Gastrocnemius medialis (tissue), 4 donors: ENCODE measurements at regions of chr10 and their contacts with region 1.

Region 1: DNA sequence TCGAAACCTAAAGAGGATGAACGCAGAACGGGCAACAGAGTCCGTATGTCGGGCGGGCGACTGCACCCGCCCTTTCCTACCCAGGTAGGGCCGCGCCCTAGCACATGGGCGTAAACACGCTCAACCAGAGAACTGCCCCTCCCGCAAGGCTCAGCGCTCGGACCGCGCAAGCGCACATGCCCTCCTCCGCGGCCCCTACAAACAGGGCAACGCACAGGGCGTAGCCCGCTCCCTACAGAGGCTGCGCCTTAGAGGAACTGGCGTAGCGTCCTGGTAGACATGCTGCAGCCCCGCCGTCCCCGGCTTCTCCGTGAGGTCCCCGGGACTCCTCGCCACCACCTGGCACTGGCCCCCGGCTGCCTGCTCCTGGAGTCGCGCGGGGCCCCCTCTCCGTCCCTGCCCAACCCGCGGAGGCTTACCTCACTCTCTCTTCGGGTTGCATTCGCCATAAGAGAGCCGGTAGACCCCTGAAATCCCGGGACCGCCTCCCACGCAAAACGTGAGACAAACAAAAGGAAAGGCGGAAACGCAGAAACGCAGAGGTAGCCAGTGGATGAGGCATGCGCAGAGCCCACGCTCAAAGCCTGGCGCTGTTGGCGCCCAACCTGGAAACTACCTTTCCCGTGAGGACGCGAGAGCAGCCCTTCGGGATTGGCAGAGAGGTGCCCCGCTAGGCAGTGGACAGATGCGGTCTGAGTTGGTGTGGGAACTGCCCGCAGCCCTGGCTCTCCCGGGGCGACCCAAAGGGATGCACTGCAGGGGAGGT is at the start of gene ZNF33B:
- DNase-seq: peak; percentile 84 to 88
- ATAC-seq: peak; percentile 94 to 98
- H3K4me3 ChIP-seq: peak within 1 kb of the TSS; percentile 77 to 98 (median 91)
- H3K27ac ChIP-seq: peak within 1 kb of the TSS; percentile 89 to 96 (median 91)
- H3K4me1 ChIP-seq: peaks cover 12 to 14% of the 10 kb centered on the region in 2 donors
- H3K27me3 ChIP-seq: no peaks in the 10 kb centered on the region
- CTCF ChIP-seq: no peak
- POLR2A ChIP-seq: peak in 1 of 2 donors; percentile 55
- total RNA-seq, gene ZNF33B: 2.7 to 5.8 (median 3.7) TPM

Region 2: DNA sequence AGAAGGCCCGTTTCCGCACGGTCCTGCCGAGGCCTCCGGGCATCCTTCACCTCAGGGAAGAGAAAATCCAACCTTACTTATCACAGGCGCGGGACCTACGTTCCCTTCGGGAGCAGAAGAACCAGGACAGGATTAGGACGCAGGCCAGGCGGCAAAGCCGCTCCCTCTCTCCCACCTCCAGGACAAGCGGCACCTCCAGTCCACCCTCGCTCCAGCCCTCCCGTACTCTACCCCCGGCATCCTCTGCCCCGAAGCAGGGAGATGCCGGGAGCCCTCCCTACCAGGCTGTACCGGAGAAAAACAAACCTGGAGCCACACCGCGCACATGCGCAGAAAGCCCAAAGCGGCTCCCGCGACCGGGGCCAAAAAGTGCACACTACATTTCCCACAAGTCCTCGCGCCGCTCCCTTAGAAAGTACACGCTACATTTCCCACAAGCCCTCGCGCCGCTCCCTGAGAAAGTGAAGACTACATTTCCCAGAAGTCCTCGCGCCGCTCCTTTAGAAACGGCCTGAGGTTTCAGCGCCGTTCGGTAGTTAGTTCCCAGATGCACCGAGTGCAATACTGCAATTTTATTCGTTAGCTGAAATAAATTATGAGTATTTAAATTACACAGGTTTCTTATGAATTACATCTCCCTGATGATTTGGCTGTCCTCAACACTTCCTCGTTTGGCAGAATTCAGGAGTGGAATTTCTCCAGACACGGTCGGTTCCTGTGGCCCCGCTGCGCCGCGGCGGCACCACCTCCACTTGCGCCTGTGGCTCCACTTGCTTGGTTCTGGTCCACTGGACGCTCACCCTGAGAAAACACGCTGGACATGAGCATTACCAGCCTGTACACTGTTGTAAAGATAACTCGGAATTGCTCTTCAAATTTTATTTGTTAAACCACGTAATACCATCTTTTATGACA is 85.5 kb before region 1 on chr10:
- in situ Hi-C with region 1: no loop called
- intact Hi-C with region 1: loop called (anchors 1 kb)
- DNase-seq: peak; percentile 93 to 95
- ATAC-seq: peak; percentile 99
- H3K4me3 ChIP-seq: peak overlapping the region; percentile 68 to 92 (median 80)
- H3K27ac ChIP-seq: peak overlapping the region; percentile 63 to 81 (median 75)
- H3K4me1 ChIP-seq: peaks cover 10 to 11% of the 10 kb centered on the region in 2 donors
- H3K27me3 ChIP-seq: no peaks in the 10 kb centered on the region
- CTCF ChIP-seq: no peak
- POLR2A ChIP-seq: peak; percentile 35 to 62

Region 3: DNA sequence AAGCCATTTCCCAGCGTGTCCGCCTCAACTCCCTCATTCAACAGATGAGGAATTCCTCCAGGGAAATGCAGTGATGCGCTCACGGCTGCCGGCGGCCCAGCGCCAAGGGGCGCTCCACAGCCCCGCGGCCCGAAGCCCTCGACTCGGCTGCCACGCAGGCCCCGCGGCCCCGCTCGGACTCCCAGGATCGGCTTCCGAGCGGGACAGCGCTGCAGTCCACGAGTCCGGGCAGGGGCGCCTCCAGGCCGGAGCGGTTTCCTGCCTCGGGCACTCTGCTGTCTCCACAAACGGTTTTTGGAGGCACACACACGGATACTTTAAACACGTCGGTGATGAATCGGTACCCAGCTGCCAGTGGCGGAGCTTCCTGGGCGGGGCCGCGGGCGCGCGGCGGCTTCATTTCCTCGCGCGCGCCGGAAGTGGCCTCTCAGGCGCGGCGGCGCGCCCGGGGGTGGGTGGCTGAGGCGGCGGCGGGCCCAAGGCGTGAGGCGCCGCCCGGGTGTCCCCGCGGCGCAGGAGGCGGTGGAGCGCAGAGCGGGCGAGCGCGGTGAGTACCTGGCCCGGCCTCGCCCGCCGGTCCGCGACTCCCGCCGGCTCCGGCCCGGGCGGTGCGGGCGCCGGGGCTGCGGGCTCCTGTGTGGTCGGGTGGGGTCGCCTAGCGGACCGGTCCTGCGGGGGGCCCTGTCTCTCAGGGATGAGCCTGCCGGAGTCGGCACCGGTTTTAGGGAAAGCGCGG is 500.0 kb after region 1 on chr10 and contains the start of gene CSGALNACT2:
- in situ Hi-C with region 1: no loop called
- intact Hi-C with region 1: loop called (anchors 5 kb)
- DNase-seq: peak; percentile 54 to 75
- ATAC-seq: peak; percentile 92 to 94
- H3K4me3 ChIP-seq: peak within 1 kb of the TSS; percentile 74 to 97 (median 83)
- H3K27ac ChIP-seq: peak within 1 kb of the TSS; percentile 76 to 89 (median 86)
- H3K4me1 ChIP-seq: peaks cover 11 to 17% of the 10 kb centered on the region in 2 donors
- H3K27me3 ChIP-seq: no peaks in the 10 kb centered on the region
- CTCF ChIP-seq: no peak
- POLR2A ChIP-seq: peak; percentile 90 to 94
- total RNA-seq, gene CSGALNACT2: 12.3 to 17.3 (median 14.1) TPM